ENCODE measurements at regions of chr3 and their contacts with region 1.

Region 1: DNA sequence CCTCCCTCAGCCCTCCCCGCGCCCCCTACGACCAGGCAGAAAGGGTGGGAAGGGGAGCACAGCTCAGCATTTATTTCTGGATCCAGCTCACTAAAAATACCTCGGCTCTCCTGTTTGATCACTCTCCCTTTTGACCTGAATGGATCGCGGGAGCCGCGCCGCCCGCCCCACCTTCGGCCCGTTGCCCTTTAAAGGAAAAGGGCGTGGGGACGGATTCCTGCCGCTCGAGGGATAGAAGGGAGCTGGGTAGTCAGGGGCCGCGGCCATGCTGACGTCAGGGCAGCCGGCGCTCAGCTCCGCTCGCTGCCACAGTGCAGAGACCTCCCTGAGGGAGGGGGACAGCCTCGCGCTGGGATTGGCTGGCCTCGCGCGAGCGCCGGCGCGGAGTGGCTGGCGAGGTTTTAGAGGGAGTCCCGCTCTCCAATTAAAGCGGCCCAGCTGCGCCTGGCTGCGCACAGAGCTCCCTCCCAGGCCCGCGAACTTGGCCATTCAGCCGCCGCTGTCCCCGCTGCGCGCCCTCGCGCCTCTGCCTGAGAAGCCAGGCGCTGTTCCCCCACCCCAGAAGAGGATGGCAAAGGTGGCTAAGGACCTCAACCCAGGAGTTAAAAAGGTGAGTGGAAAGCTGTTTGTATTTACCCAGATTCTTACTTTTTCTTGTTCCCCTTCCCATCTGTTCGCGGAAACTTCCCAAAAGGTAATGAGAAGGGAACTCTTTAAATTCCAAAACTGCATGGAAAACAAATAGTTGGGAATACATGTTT is at the start of gene LMCD1:
- DNase-seq: peak; percentile 53 to 88 (median 73)
- ATAC-seq: peak; percentile 96
- H3K4me3 ChIP-seq: peak within 1 kb of the TSS; percentile 54 to 62
- H3K4me3 Mint-ChIP-seq: peak within 1 kb of the TSS; percentile 81
- H3K27ac ChIP-seq: peak within 1 kb of the TSS in 1 of 2 experiments; percentile 24
- H3K27ac Mint-ChIP-seq: no peak within 1 kb of the TSS
- H3K4me1 ChIP-seq: peaks cover 7% of the 10 kb centered on the region
- H3K4me1 Mint-ChIP-seq: peaks cover 11% of the 10 kb centered on the region
- H3K27me3 ChIP-seq: no peaks in the 10 kb centered on the region
- H3K27me3 Mint-ChIP-seq: peaks cover 26% of the 10 kb centered on the region
- CTCF ChIP-seq: no peak
- total RNA-seq, gene LMCD1: 0.33 TPM

Region 2: DNA sequence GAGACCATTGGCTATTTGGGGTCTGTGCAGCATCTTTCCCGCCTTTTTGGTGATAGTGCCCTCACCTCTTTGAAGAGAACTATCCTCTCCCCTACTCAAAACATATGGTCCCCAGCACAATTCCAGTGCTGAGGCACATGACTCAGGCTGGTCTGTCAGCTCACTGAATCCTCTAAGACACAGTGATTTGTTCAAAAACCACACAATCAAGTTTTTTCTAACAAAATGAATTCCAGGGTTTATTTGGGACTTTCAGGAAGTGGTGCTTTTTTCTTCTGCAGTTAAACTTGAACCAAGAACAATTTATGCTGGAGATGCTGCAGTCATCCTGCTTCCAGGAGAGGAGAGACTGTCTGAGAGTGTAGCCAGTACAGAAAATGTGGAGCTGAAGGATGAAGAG is 142.4 kb before region 1 on chr3:
- CTCF ChIA-PET with region 1: no interaction called
- POLR2A ChIA-PET with region 1: no interaction called
- intact Hi-C with region 1: loop called in 1 of 2 experiments (anchors 5 kb)
- DNase-seq: no peak
- ATAC-seq: no peak
- H3K4me3 ChIP-seq: no peak overlapping the region
- H3K4me3 Mint-ChIP-seq: no peak overlapping the region
- H3K27ac ChIP-seq: no peak overlapping the region
- H3K27ac Mint-ChIP-seq: peak overlapping the region; percentile 38
- H3K4me1 ChIP-seq: peaks cover 44% of the 10 kb centered on the region
- H3K4me1 Mint-ChIP-seq: peaks cover 68% of the 10 kb centered on the region
- H3K27me3 ChIP-seq: no peaks in the 10 kb centered on the region
- H3K27me3 Mint-ChIP-seq: no peaks in the 10 kb centered on the region
- CTCF ChIP-seq: no peak

Region 3: GRCh38 chr3:8567784-8568575 is 66.4 kb after region 1 on chr3:
- CTCF ChIA-PET with region 1: no interaction called
- POLR2A ChIA-PET with region 1: no interaction called
- intact Hi-C with region 1: loop called in 1 of 2 experiments (anchors 2 kb)
- DNase-seq: no peak
- ATAC-seq: no peak
- H3K4me3 ChIP-seq: no peak overlapping the region
- H3K4me3 Mint-ChIP-seq: no peak overlapping the region
- H3K27ac ChIP-seq: no peak overlapping the region
- H3K27ac Mint-ChIP-seq: no peak overlapping the region
- H3K4me1 ChIP-seq: no peaks in the 10 kb centered on the region
- H3K4me1 Mint-ChIP-seq: peaks cover 7% of the 10 kb centered on the region
- H3K27me3 ChIP-seq: no peaks in the 10 kb centered on the region
- H3K27me3 Mint-ChIP-seq: peaks cover 2% of the 10 kb centered on the region
- CTCF ChIP-seq: no peak

Region 4: GRCh38 chr3:8638994-8639658 is 137.6 kb after region 1 on chr3:
- CTCF ChIA-PET with region 1: no interaction called
- POLR2A ChIA-PET with region 1: no interaction called
- intact Hi-C with region 1: no loop called
- DNase-seq: no peak
- ATAC-seq: no peak
- H3K4me3 ChIP-seq: no peak overlapping the region
- H3K4me3 Mint-ChIP-seq: no peak overlapping the region
- H3K27ac ChIP-seq: no peak overlapping the region
- H3K27ac Mint-ChIP-seq: no peak overlapping the region
- H3K4me1 ChIP-seq: no peaks in the 10 kb centered on the region
- H3K4me1 Mint-ChIP-seq: no peaks in the 10 kb centered on the region
- H3K27me3 ChIP-seq: no peaks in the 10 kb centered on the region
- H3K27me3 Mint-ChIP-seq: peaks cover 1% of the 10 kb centered on the region
- CTCF ChIP-seq: no peak

Measured in CD8-positive, alpha-beta T cell (primary cell).